ENCODE measurements at regions of chr3 and their contacts with region 1.

Region 1: DNA sequence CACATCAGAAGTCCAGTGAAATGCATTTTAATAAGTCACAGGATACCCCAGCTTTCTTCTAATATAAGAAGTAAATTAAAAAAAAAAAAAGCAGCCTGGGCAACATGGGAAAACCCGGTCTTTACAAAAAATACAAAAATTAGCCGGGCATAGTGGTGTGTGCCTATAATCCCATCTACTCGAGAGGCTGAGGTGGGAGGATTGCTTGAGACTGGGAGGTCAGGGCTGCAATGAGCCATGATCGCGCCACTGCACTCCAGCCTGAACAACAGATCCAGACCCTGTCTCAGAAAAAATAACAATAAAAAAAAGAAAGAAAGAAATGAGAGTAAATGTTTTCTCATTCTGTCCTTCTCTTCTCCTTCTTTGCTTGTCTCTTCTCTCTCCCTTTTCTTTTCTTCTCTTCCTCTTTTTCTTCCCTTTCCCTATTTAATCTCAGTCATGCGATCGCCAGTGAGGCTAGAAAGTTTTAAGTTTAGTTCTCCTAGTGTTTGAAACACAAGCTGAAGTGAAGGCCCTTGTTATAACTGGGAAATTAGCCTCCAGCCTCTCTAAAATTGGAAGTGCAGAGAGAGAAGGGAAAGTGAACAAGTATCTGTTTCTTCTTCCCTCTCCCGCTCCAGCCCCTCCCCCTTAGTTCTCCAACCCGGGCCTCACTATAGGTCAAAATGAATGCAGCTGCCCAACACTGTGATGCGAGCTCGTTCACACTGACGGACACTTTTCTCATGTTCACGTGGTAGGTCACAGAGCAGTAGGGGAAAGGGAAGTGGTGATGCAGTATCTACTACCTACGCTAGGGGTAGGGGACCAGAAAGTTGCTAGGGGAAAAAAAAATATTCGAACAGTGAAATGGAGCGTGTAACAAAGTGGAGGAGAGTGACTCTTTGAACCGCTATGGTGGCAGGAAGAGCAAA is 23.5 kb upstream of the TSC22D2 start:
- DNase-seq: no peak
- H3K4me3 ChIP-seq: no peak overlapping the region
- H3K27ac ChIP-seq: no peak overlapping the region
- H3K4me1 ChIP-seq: peaks cover 0 to 6% (median 1%) of the 10 kb centered on the region in 4 experiments; a peak in 4 of 7 replicates
- H3K27me3 ChIP-seq: no peaks in the 10 kb centered on the region
- CTCF ChIP-seq: peak in 2 of 3 experiments; percentile 15 to 51; a peak in 2 of 4 replicates
- EP300 ChIP-seq: no peak
- POLR2A ChIP-seq: no peak
- RAD21 ChIP-seq: peak; percentile 17 to 34; a peak in 2 of 4 replicates

Region 2: GRCh38 chr3:150324567-150325224 is 59.9 kb before region 1 on chr3:
- CTCF ChIA-PET with region 1: interaction called, 10 read pairs
- POLR2A ChIA-PET with region 1: no interaction called
- DNase-seq: no peak
- H3K4me3 ChIP-seq: no peak overlapping the region
- H3K27ac ChIP-seq: no peak overlapping the region
- H3K4me1 ChIP-seq: no peaks in the 10 kb centered on the region
- H3K27me3 ChIP-seq: no peaks in the 10 kb centered on the region
- CTCF ChIP-seq: no peak
- EP300 ChIP-seq: no peak
- POLR2A ChIP-seq: no peak
- RAD21 ChIP-seq: no peak

Measured in H1 (cell line).